ENCODE measurements at regions of chr9 and their contacts with region 1.

Region 1: GRCh38 chr9:109903515-109904138 is 123.6 kb downstream of the PALM2AKAP2 start:
- DNase-seq: peak; percentile 72
- H3K4me3 Mint-ChIP-seq: no peak overlapping the region
- H3K27ac Mint-ChIP-seq: no peak overlapping the region
- H3K4me1 Mint-ChIP-seq: peaks cover 15% of the 10 kb centered on the region
- H3K27me3 Mint-ChIP-seq: peaks cover 7% of the 10 kb centered on the region

Region 2: DNA sequence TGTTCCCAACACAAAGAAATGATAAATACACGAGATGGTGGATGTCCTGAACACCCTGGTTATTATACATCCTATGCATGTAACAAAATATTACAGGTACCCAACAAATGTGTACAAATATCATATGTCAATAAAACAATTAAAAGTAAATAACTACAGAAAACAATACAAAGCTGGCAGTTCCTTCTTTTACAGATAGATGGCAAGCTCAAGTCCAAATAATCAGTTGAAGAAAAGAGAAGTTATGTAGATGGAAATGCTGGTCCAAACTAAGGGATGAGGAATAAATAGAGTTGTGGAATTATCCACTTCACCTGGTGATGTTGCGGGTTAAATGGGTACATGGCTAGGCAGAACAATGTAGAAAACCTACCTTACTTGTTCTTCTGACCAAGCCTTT is 44.2 kb before region 1 on chr9:
- CTCF ChIA-PET with region 1: no interaction called
- POLR2A ChIA-PET with region 1: no interaction called
- DNase-seq: no peak
- H3K4me3 Mint-ChIP-seq: no peak overlapping the region
- H3K27ac Mint-ChIP-seq: no peak overlapping the region
- H3K4me1 Mint-ChIP-seq: no peaks in the 10 kb centered on the region
- H3K27me3 Mint-ChIP-seq: peaks cover 39% of the 10 kb centered on the region

Region 3: DNA sequence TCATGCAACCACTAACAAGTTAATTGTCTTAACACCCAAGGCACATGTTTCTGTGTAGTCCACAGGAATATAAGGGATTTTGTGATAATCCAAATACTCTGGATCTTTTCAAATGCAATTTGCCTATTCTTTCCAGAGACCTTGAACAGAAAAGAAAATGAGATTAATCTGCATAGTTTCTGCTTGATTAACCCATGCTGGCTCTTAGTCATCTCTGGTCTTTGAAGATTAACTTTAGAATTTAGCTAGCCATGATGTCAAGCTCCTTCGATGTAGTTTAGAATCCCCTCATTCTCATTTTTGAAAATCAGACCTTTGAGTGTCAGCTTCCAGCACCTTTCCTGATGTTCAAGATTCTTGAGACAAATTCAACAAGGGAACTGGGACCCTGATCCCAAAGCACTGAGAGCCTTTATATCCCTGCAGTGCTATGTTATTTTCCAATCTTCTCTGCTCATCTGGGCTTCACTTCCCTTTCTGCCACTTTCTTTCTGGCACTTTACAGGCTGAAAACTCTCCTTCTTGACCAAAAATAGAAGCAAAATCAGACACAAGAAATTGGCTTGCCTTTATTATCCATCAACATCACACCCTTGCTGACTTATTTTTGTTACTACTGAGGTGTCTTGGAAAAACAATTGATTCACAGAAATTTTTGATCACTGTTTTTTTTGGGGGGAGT is 31.9 kb after region 1 on chr9:
- CTCF ChIA-PET with region 1: no interaction called
- POLR2A ChIA-PET with region 1: no interaction called
- DNase-seq: no peak
- H3K4me3 Mint-ChIP-seq: no peak overlapping the region
- H3K27ac Mint-ChIP-seq: no peak overlapping the region
- H3K4me1 Mint-ChIP-seq: peaks cover 24% of the 10 kb centered on the region
- H3K27me3 Mint-ChIP-seq: peaks cover 3% of the 10 kb centered on the region

Region 4: DNA sequence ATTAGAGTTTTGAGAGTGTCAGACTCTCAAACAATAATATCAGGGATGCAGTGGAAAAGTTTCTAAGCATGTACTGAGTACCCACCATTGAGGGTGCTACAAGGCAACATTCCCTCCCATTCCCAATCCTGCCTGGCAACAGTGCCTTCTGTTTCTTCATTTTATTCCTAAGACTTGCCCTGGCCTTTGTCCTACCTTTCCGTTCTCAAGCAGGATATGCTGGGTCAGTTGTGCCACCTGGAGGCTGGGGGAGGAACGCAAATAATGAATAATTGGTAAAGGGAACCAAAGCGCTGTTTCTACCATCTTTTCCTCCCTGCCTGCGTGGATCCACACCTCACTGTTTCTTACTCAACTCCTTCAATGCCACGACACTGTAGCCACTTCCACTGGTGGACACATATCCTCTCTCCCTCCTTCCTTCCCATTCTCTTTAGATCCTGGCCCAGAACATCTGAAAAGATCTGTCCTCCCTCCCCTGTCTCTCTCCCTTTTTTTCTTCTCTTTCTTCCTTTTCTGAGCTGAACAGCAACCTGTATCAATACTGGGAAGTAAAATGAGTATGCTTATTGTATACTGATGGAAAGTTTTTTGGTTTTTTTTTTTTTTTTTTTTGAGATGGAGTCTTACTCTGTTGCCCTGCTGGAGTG is 154.8 kb after region 1 on chr9:
- CTCF ChIA-PET with region 1: interaction called, 43 read pairs
- POLR2A ChIA-PET with region 1: interaction called, 4 read pairs
- DNase-seq: peak; percentile 65
- H3K4me3 Mint-ChIP-seq: no peak overlapping the region
- H3K27ac Mint-ChIP-seq: no peak overlapping the region
- H3K4me1 Mint-ChIP-seq: peaks cover 36% of the 10 kb centered on the region
- H3K27me3 Mint-ChIP-seq: no peaks in the 10 kb centered on the region

Region 5: GRCh38 chr9:110143950-110144545 is 240.4 kb after region 1 on chr9:
- CTCF ChIA-PET with region 1: interaction called, 85 read pairs
- POLR2A ChIA-PET with region 1: interaction called, 12 read pairs
- DNase-seq: peak; percentile 56
- H3K4me3 Mint-ChIP-seq: peak overlapping the region; percentile 57
- H3K27ac Mint-ChIP-seq: peak overlapping the region; percentile 95
- H3K4me1 Mint-ChIP-seq: peaks cover 60% of the 10 kb centered on the region
- H3K27me3 Mint-ChIP-seq: no peaks in the 10 kb centered on the region

Region 6: DNA sequence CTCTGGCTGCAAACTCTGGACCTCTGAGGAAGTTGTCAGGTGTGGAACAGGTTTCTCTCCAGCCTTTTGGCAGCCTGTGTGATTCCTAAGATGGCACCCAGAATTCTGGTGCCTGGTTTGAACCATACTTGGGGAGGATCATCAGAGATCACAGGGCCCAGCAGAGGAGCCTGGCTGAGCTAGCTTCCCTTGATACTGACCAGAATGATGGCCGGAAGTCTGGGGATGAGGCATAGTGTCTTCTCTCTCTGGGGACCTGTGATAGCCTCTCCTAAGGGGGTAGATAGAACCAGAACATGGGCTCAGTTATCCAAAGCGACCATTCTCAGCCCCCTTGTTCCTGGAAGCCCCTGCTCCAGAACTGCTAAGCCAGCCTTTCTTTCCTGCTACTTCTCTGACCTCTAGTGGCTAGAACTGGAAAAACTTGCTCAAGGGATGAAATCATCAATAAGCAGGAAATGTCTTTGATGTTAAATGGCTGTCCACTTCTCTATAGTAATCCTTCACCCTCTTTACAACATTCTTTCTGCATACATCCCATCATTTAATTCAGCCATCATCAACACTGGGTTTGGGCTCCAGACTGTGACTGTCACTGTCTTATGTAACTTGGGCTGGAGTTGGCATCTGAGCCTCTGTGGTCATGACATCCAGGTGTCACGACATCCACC is 249.2 kb after region 1 on chr9:
- CTCF ChIA-PET with region 1: interaction called, 85 read pairs
- POLR2A ChIA-PET with region 1: interaction called, 12 read pairs
- DNase-seq: no peak
- H3K4me3 Mint-ChIP-seq: no peak overlapping the region
- H3K27ac Mint-ChIP-seq: peak overlapping the region; percentile 73
- H3K4me1 Mint-ChIP-seq: peaks cover 91% of the 10 kb centered on the region
- H3K27me3 Mint-ChIP-seq: no peaks in the 10 kb centered on the region

Region 7: GRCh38 chr9:110217656-110218099 is 314.1 kb after region 1 on chr9:
- CTCF ChIA-PET with region 1: interaction called, 10 read pairs
- POLR2A ChIA-PET with region 1: no interaction called
- DNase-seq: no peak
- H3K4me3 Mint-ChIP-seq: no peak overlapping the region
- H3K27ac Mint-ChIP-seq: no peak overlapping the region
- H3K4me1 Mint-ChIP-seq: peaks cover 9% of the 10 kb centered on the region
- H3K27me3 Mint-ChIP-seq: peaks cover 25% of the 10 kb centered on the region